H1 (cell line): ENCODE measurements at regions of chr1 and their contacts with region 1.

Region 1: GRCh38 chr1:225881969-225882693 is at the start of gene TMEM63A:
- DNase-seq: peak; percentile 75 to 96
- H3K4me3 ChIP-seq: peak within 1 kb of the TSS; percentile 53 to 92 (median 78)
- H3K27ac ChIP-seq: peak within 1 kb of the TSS; percentile 16; the same call in 1 of the 2 replicates
- H3K4me1 ChIP-seq: peaks cover 9 to 22% (median 16%) of the 10 kb centered on the region in 4 experiments
- H3K27me3 ChIP-seq: peaks cover 0 to 15% (median 7%) of the 10 kb centered on the region in 4 experiments; a peak in 4 of 7 replicates
- CTCF ChIP-seq: peak in 2 of 3 experiments; percentile 1 to 16; a peak in 1 of 4 replicates
- EP300 ChIP-seq: peak in 1 of 2 experiments; percentile 23; a peak in 1 of 3 replicates
- POLR2A ChIP-seq: peak in 1 of 2 experiments; percentile 71; a peak in 2 of 3 replicates
- RAD21 ChIP-seq: no peak; a peak in 1 of 4 replicates
- total RNA-seq, gene TMEM63A: 41.2 and 55.4 TPM in 2 replicates

Region 2: DNA sequence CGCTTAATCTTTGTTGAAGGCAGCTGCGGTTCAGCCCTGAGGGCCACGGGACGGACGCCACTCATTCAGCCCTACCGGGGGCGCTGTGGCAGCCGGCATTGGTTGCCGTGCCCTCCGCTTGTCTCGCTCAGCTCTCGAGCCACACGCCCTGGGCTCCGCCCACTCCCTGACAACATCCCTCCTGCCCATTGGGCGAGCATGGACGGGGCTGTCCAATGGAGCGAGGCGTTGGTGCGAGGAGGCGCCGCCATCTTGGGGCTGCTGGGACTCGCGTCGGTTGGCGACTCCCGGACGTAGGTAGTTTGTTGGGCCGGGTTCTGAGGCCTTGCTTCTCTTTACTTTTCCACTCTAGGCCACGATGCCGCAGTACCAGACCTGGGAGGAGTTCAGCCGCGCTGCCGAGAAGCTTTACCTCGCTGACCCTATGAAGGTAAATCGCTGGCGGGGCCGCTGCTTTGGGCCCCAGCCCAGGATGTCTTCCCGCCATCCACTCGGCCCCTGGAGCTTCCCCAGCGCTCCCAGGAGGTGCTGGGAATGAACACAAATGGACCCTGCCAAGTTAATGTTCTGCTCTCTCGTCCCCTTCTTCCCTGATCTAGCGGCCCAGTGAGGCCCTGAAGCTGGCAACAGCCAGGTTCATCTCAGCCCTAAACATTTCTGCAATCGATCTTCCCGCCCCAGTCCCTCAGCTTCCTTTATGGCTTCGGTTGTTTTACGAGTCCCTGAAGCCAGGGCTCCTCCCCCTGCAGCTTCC is 104.4 kb before region 1 on chr1 and contains the start of gene SRP9:
- CTCF ChIA-PET with region 1: interaction called, 4 read pairs
- POLR2A ChIA-PET with region 1: interaction called, 18 read pairs
- DNase-seq: peak; percentile 98 to 99
- H3K4me3 ChIP-seq: peak within 1 kb of the TSS; percentile 92 to 99 (median 96)
- H3K27ac ChIP-seq: peak within 1 kb of the TSS; percentile 99
- H3K4me1 ChIP-seq: peaks cover 1 to 5% (median 4%) of the 10 kb centered on the region in 4 experiments; a peak in 6 of 7 replicates
- H3K27me3 ChIP-seq: no peaks in the 10 kb centered on the region
- CTCF ChIP-seq: peak; percentile 78 to 96 (median 92)
- EP300 ChIP-seq: no peak
- POLR2A ChIP-seq: peak; percentile 89 to 95
- RAD21 ChIP-seq: peak; percentile 69 to 72
- total RNA-seq, gene SRP9: 446 and 448 TPM in 2 replicates

Region 3: DNA sequence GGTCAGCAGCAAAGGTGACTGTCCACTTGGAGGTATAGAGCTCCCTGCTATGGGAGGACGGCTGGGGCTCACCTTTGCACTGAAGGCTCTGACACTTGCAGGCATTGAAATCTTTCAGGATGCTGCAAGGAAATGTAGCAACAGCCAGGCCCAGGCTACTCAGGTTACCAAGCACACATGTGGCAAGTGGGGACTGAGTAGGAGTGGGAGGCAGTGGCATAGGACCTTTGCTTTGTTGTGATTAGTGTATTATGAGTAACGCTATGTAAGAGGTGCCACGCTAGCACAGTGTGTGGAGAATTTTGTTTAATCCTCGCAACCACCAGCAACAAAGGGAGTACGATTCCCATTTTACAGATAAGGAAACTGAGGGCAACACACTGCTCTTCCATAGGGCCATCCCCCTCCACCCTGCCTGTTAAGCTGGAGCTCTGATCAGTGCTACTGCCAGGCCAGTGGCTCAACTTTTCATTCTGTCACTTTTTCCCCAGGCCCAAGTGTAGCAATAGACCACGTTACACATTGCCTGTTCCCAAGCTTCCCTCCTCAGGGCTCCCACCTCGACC is 21.2 kb before region 1 on chr1:
- CTCF ChIA-PET with region 1: interaction called, 18 read pairs
- POLR2A ChIA-PET with region 1: interaction called, 10 read pairs
- DNase-seq: no peak
- H3K4me3 ChIP-seq: no peak overlapping the region
- H3K27ac ChIP-seq: no peak overlapping the region
- H3K4me1 ChIP-seq: no peaks in the 10 kb centered on the region
- H3K27me3 ChIP-seq: no peaks in the 10 kb centered on the region
- CTCF ChIP-seq: no peak
- EP300 ChIP-seq: no peak
- POLR2A ChIP-seq: no peak
- RAD21 ChIP-seq: 0 out of 4 replicates have a peak, but pooled peaks of 1 of the 2 experiments have one; percentile 1

Region 4: DNA sequence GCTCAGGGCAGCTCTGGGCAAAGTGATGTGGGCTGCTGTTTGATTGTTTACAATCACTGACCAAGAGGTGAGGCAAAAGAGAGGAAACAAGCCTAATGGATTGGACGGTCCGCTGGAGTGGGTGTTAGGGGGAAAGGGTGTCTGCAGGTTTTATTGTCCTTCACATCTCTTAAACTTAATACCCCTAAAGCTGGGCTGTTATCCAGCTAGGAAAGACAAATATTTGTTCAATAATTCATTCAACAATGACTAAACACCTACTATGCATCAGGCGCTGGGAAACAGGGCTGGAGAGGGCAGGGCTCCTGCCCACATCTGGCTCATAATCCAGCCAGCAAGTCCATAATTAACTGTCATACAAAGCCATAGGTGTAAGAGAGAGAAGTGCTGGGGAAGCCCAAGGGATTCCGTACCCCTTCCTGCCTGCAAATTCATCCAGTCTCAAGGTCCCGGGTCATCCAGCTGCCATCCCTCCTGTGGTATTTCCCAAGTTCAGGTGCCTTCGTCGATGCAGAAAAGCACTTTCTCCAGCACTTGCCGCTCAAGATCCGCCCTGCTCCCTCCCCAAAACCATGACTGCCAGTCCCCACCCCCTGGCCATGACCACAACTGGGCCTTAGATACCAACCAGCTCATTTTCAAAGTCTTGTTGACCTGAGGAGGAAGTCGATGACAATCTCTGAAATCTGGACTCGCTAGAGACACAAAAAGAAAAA is 10.6 kb before region 1 on chr1:
- CTCF ChIA-PET with region 1: interaction called, 79 read pairs
- POLR2A ChIA-PET with region 1: interaction called, 27 read pairs
- DNase-seq: no peak
- H3K4me3 ChIP-seq: no peak overlapping the region
- H3K27ac ChIP-seq: no peak overlapping the region
- H3K4me1 ChIP-seq: peaks cover 0 to 3% (median 0%) of the 10 kb centered on the region in 4 experiments; a peak in 2 of 7 replicates
- H3K27me3 ChIP-seq: no peaks in the 10 kb centered on the region
- CTCF ChIP-seq: no peak
- EP300 ChIP-seq: no peak
- POLR2A ChIP-seq: no peak
- RAD21 ChIP-seq: no peak

Region 5: GRCh38 chr1:225903623-225904022 is 21.5 kb after region 1 on chr1:
- CTCF ChIA-PET with region 1: interaction called, 406 read pairs
- POLR2A ChIA-PET with region 1: interaction called, 63 read pairs
- DNase-seq: no peak
- H3K4me3 ChIP-seq: no peak overlapping the region
- H3K27ac ChIP-seq: no peak overlapping the region
- H3K4me1 ChIP-seq: peaks cover 0 to 11% (median 10%) of the 10 kb centered on the region in 4 experiments; a peak in 6 of 7 replicates
- H3K27me3 ChIP-seq: no peaks in the 10 kb centered on the region
- CTCF ChIP-seq: no peak
- EP300 ChIP-seq: no peak
- POLR2A ChIP-seq: no peak
- RAD21 ChIP-seq: no peak

Region 6: GRCh38 chr1:225923692-225924555 is 41.8 kb after region 1 on chr1 and contains the start of gene PYCR2:
- CTCF ChIA-PET with region 1: interaction called, 27 read pairs
- POLR2A ChIA-PET with region 1: interaction called, 15 read pairs
- DNase-seq: peak; percentile 88 to 92
- H3K4me3 ChIP-seq: peak within 1 kb of the TSS; percentile 91 to 97 (median 93)
- H3K27ac ChIP-seq: peak within 1 kb of the TSS; percentile 69
- H3K4me1 ChIP-seq: peaks cover 0 to 9% (median 5%) of the 10 kb centered on the region in 4 experiments; a peak in 4 of 7 replicates
- H3K27me3 ChIP-seq: no peaks in the 10 kb centered on the region
- CTCF ChIP-seq: peak in 1 of 3 experiments; percentile 7; a peak in 1 of 4 replicates
- EP300 ChIP-seq: no peak
- POLR2A ChIP-seq: peak in 1 of 2 experiments; percentile 87; a peak in 2 of 3 replicates
- RAD21 ChIP-seq: no peak; a peak in 1 of 4 replicates
- total RNA-seq, gene PYCR2: 84.3 and 84.6 TPM in 2 replicates